ENCODE measurements at regions of chr4 and their contacts with region 1.

Region 1: GRCh38 chr4:152408514-152409327 is 127.2 kb downstream of the FBXW7 start:
- DNase-seq: no peak
- H3K4me3 Mint-ChIP-seq: no peak overlapping the region
- H3K27ac Mint-ChIP-seq: no peak overlapping the region
- H3K4me1 Mint-ChIP-seq: no peaks in the 10 kb centered on the region
- H3K27me3 Mint-ChIP-seq: no peaks in the 10 kb centered on the region

Region 2: DNA sequence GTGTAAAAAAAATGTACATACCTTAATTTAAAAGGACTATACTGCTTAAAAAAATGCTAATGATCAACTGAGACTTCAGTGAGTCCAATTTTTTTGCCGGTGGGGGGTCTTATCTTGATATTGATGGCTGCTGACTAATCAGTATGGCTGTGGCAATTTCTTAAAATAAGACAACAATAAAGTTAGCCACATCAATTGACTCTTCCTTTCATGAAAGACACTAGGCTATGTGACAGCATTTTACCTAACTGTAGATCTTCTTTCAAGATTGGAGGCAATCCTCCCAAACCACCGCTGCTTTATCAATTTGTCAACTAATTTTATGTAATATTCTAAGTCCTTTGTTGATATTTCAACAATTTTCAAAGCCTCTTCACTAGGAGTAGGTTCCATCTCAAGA is 11.1 kb after region 1 on chr4:
- CTCF ChIA-PET with region 1: interaction called, 11 read pairs
- DNase-seq: no peak
- H3K4me3 Mint-ChIP-seq: no peak overlapping the region
- H3K27ac Mint-ChIP-seq: no peak overlapping the region
- H3K4me1 Mint-ChIP-seq: peaks cover 6% of the 10 kb centered on the region
- H3K27me3 Mint-ChIP-seq: no peaks in the 10 kb centered on the region

Region 3: DNA sequence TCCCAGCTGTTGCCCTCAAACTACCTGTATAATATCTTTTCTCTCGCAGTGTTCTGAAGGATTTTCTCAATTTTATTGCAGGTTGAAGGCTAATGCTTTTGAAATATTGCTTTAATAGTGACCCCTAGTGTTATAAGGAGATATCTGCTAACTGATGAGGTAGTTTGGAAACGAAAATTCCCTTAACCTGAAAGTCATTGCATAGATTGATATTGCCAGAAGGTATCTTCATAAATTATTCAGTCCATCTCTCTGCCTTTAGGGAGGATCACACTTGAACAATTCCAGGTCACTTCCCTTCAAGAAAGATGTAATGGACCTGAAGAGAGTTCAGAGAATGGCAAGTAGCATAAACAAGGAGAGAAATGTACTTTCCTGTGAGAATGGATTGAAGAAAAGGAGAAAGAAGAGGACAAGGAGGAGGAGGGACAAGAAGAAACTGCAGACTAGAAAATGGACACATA is 326.7 kb after region 1 on chr4:
- CTCF ChIA-PET with region 1: interaction called, 13 read pairs
- DNase-seq: no peak
- H3K4me3 Mint-ChIP-seq: no peak overlapping the region
- H3K27ac Mint-ChIP-seq: no peak overlapping the region
- H3K4me1 Mint-ChIP-seq: no peaks in the 10 kb centered on the region
- H3K27me3 Mint-ChIP-seq: peaks cover 7% of the 10 kb centered on the region